Right ventricle myocardium superior (tissue), 1 donor: ENCODE measurements at regions of chr16 and their contacts with region 1.

Region 1: DNA sequence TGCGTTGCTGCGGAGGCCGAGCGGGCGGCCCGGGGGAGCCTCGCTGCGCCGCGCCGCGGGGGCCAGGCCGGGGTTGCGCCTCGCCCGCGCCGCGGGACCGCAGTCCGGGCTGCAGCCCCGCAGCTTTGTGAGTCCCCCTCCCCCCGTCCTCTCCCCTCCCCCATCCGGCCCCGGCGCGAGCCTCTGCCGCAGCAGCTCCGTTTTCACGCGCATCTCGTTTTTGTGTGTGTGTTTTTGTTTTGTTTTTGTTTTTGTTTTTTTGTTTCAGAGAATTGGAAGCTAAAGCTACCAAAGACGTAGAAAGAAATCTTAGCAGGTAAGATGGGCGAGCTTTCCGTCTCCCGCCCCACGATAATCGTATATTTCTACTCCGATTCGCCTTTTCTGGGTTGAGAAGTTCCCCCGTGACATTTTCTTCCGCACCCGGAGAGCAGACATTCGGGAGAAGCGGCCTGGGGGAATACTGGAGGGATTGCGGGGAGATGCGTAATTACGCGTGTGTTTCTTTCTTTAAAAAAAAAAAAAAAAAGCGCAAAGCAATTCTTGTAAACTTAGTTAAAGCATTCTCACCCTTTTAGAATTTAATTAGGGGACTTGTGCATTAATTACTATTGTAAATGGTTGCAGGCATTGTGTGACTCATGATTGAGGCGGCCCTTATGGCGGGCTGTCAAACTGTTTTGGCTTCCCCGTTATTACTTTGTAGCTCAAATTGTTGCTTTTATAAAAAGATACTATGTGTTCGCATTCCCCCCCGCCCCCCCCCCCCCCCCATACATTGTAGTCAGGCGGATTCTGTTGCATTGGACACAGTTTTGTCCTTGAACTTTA is 749 bp downstream of the TNRC6A start:
- DNase-seq: peak; percentile 45
- ATAC-seq: peak; percentile 9

Region 2: GRCh38 chr16:24776501-24777220 is 46.5 kb after region 1 on chr16:
- intact Hi-C with region 1: loop called (anchors 2 kb)
- DNase-seq: peak; percentile 66
- ATAC-seq: peak; percentile 89

Region 3: DNA sequence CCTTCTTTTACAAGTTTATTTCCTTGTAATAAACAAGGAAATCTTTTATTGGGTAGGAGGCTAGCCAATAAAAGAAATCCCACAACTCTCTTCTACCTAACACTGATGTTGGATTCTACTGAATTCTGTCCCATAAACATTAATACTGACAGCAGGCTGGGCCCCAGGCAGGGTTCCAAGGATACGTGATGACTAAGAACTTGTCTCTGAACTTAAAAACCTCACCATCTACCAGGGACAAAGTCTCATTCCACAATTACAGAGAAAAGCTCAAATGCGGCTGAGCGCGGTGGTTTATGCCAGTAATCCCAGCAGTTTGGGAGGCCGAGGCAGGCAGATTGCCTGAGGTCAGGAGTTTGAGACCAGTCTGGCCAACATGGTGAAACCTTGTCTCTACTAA is 220.1 kb after region 1 on chr16:
- intact Hi-C with region 1: no loop called
- DNase-seq: no peak
- ATAC-seq: no peak